ENCODE measurements at regions of chr14 and their contacts with region 1.

Region 1: GRCh38 chr14:64294672-64295413 is 672 bp upstream of the ESR2 start:
- DNase-seq: peak; percentile 70 to 81 (median 76)
- ATAC-seq: peak; percentile 88 to 96 (median 90)
- H3K4me3 ChIP-seq: peak overlapping the region; percentile 31 to 45 (median 37)
- H3K27ac ChIP-seq: no peak overlapping the region
- H3K4me1 ChIP-seq: peaks cover 0 to 13% (median 6%) of the 10 kb centered on the region in 4 donors
- H3K27me3 ChIP-seq: peaks cover 0 to 10% of the 10 kb centered on the region in 2 donors
- CTCF ChIP-seq: peak; percentile 64 to 83 (median 76)
- POLR2A ChIP-seq: no peak

Region 2: GRCh38 chr14:63800651-63801375 is 494.0 kb before region 1 on chr14:
- intact Hi-C with region 1: loop called in 1 of 2 experiments (anchors 10 kb)
- DNase-seq: no peak
- ATAC-seq: no peak
- H3K4me3 ChIP-seq: no peak overlapping the region
- H3K27ac ChIP-seq: no peak overlapping the region
- H3K4me1 ChIP-seq: no peaks in the 10 kb centered on the region
- H3K27me3 ChIP-seq: no peaks in the 10 kb centered on the region
- CTCF ChIP-seq: no peak
- POLR2A ChIP-seq: no peak

Measured in right lobe of liver (tissue), 6 donors.